ENCODE measurements at regions of chr9 and their contacts with region 1.

Region 1: GRCh38 chr9:78261403-78262001 is 25.6 kb downstream of the CEP78 start:
- DNase-seq: peak; percentile 35
- CTCF ChIP-seq: peak; percentile 57

Region 2: DNA sequence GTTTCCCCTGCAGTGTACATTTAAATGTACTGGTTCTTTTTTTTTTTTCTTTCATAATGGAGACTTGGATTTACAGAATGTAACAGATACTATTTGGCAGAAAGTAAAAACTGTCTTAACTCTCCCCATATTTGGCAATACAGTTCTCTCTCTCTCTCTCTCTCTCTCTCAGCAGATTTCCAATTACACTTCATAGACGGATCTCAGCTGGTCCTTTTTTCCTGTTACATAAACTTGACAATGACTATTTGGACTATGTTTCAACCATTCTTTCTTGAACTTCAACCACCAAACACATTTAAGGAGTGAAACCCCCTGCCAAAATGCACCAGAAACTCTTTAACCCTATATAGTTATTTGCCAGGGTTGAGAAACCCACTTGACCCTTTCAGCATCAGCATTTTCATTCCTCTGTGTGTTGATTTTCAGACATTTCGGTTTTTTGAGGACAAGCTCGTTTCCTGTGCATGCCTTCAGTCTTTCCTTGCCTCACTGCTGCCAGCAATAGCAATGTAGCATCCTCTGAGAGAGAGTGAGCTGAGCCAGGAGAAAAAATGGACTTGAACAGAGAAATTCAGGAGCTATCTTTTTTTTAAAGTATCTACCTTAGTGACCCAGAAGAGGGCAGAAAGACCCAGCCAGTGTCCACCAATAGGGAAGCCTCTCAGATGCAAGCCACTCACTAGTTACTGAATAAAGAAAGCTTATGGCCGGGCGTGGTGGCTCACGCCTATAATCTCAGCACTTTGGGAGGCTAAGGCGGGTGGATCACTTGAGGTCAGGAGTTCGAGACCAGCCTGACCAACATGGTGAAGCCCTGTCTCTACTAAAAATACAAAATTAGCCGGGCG is 587.3 kb before region 1 on chr9:
- in situ Hi-C with region 1: no loop called
- DNase-seq: no peak
- CTCF ChIP-seq: no peak

Region 3: DNA sequence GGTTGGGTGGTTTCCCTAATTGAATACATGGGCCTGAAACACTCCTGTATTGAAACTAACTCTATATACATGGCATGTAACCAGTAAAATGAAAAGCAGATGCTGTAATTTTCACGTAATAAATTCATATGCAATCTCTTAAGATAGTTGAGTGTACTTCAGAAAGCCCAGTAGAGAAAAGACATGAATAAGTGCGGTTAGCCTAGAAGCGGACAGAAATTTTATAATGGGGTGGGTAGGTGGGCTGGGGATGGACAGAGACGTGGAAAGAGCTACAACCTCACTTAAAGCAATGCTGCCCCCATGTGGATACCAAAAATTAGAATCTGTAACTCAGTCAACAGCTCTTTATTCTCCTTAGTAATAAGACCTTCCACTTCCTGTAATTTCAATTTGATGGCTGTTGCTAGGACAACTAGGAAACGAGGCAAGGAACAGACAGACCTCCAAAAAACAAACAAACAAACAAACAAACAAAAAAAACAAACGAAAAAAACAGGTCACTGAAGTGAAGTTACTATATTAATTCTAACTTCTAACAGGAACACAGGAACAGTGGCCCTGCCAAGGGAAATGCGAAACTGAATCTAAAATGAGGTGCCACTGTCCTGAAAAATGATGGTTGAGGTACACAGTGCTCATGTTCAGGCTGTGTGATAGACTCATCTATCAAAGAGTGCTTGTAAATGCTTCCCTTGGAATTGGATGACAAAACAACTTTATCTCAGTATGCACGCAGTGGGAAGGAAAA is 510.0 kb before region 1 on chr9:
- in situ Hi-C with region 1: no loop called
- DNase-seq: peak; percentile 17
- CTCF ChIP-seq: peak; percentile 53

Region 4: GRCh38 chr9:78158286-78158685 is 103.2 kb before region 1 on chr9:
- in situ Hi-C with region 1: no loop called
- DNase-seq: no peak
- CTCF ChIP-seq: no peak

Region 5: DNA sequence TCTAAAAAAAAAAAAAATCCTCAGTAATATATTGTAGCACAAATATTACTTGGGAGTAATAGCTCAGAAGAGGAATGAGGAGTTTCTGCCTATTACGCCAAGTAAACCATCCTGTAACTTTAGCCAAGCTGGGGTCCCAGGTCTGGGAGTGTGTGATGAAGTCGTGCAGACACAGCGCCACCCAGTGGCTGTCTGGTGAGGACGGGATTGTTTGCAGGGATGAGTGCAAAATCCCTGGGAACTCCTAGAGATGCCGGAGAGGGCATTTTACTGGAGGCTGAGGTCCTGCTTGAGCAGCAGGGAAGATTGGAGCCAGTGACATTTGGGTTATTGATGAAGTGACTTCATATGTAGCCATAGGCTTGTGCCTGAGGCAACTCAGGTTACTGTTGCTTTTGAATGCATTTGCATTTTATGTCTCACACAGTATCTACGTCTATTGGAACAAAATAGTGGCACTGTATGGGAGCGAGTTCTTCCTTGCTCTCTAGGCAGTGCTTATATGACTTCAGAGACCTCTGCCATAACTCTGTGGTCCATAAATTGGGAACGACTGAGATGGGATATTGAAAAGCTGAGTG is 108.2 kb after region 1 on chr9:
- in situ Hi-C with region 1: loop called (anchors 25 kb)
- DNase-seq: peak; percentile 31
- CTCF ChIP-seq: peak; percentile 90

Region 6: DNA sequence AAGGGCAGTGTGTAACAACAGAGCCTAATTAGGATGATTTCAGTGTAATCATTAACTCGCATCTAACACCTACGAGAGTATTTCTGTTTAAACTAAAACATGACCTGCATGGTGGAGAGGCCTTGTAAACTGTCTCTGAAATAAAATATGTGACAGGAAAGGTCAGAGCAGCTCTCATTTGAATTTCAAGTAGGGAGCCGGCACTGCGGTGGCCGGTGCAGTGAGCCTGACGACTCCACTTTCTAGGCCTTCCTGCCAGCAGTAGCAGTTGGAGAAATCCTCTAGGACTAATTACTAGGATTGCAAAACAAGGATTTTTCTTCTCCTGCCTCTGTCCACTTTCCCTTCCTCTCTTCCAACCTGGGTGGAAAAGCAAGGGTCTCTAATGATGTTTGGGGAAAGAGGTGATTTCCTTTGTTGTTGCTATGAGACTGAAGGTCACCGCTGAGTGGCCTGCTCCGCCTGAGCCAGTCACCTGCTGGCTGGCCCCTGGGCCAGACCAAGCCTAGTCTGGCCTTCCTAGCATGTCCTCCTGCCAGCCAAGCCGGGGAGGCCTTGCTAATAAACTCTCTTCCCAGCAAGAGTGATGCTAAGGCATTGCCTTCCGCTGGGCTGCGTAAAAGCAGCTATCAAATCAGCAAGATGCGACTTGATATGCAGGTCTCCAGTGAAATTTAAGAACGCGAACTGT is 281.1 kb after region 1 on chr9:
- in situ Hi-C with region 1: no loop called
- DNase-seq: no peak
- CTCF ChIP-seq: no peak